ENCODE measurements at regions of chrX and their contacts with region 1.

Region 1: GRCh38 chrX:15349046-15349445 is 13.7 kb upstream of the PIGA start:
- DNase-seq: peak; percentile 68 to 74
- H3K4me3 ChIP-seq: no peak overlapping the region
- H3K4me1 ChIP-seq: no peaks in the 10 kb centered on the region
- H3K27me3 ChIP-seq: no peaks in the 10 kb centered on the region; the same call in 1 of the 2 replicates

Region 2: GRCh38 chrX:15143050-15143824 is 205.8 kb before region 1 on chrX:
- in situ Hi-C with region 1: no loop called
- DNase-seq: peak; percentile 32 to 73
- H3K4me3 ChIP-seq: no peak overlapping the region
- H3K4me1 ChIP-seq: no peaks in the 10 kb centered on the region
- H3K27me3 ChIP-seq: no peaks in the 10 kb centered on the region

Region 3: GRCh38 chrX:15468036-15468435 is 119.0 kb after region 1 on chrX:
- in situ Hi-C with region 1: loop called (anchors 5 kb)
- DNase-seq: peak in 1 of 2 experiments; percentile 40
- H3K4me3 ChIP-seq: no peak overlapping the region
- H3K4me1 ChIP-seq: peaks cover 20% of the 10 kb centered on the region
- H3K27me3 ChIP-seq: no peaks in the 10 kb centered on the region

Region 4: DNA sequence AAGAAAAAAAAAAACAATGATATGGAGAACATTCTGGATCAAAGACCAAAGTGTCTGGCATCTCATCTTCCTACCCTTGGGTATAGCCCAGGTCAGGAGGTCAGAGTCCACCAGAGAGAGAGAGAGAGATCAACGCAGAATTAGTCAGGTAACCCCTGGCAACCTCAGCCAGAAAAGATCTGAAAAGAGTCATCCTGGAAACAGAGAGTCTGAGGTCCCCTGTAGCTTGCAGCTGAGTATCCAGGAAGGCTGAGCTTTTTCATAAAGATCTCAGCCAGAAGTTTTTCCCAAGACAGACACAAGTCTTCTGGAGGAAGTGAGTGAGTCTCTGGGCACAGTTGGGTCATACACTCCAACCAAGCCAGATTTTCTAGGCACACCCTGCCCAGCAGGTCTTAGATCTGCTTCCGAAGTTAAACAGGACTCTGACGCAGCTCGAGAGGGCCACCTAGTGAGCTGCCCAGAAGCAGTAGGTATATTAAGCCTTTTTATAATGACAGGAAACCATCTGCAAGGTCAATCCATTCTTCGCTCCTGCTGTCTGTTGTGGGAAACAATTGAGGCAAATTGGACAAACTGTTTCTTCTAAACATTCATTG is 216.0 kb after region 1 on chrX:
- in situ Hi-C with region 1: loop called (anchors 5 kb)
- DNase-seq: peak; percentile 67 to 74
- H3K4me3 ChIP-seq: no peak overlapping the region
- H3K4me1 ChIP-seq: no peaks in the 10 kb centered on the region
- H3K27me3 ChIP-seq: peaks cover 5% of the 10 kb centered on the region

Measured in HAP-1 (cell line).